ENCODE measurements at regions of chr9 and their contacts with region 1.

Region 1: DNA sequence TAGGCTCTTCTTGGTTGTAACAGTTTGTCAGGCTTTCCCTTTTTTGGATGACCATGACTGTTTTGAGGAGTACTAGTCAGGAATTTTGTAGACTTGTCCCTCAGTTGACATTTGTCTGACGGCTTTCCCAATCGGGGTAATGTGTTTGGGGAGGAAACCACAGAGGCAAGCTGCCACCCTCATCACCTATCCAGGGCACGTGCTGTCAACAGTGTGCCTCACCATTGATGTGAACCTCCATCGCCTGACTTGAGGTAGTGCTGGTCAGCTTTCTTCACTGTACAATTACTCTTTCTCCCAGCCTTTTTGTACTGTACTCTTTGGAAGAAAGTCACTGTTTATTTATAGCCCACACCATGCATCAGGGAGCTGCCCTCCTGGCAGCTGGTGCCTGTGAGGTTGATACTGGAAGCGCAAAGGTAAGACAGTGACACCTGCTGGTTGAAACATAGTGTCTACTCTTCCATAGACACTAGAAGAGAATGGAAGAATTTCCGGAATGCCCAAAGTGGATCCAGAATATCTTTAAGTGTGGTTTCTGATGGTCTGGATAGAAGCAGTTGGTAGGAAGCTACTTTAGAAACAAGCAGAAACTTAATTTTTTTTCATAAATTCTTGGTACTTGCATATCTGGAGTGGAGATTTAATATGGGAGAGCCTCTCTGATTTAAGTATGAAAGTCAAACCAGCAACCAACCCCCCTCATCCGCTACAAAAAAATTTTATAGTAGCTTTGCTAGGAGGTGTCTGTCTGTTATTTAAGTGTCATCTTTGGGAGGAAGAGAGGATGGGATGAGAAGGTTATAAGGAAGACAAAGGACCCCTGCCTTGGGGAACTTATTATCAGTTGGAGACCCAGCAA is 69.3 kb downstream of the SNX30 start:
- DNase-seq: peak; percentile 58
- H3K4me3 ChIP-seq: peak overlapping the region in 1 of 2 experiments; percentile 7; a peak in 1 of 4 replicates
- H3K27ac ChIP-seq: no peak overlapping the region; a peak in 1 of 4 replicates
- H3K4me1 ChIP-seq: peaks cover 0 to 2% of the 10 kb centered on the region in 2 experiments; a peak in 1 of 4 replicates
- H3K27me3 ChIP-seq: no peaks in the 10 kb centered on the region
- CTCF ChIP-seq: peak; percentile 73
- EP300 ChIP-seq: no peak
- RAD21 ChIP-seq: peak; percentile 80

Region 2: GRCh38 chr9:112836394-112836793 is 16.5 kb after region 1 on chr9:
- CTCF ChIA-PET with region 1: interaction called, 10 read pairs
- POLR2A ChIA-PET with region 1: no interaction called
- DNase-seq: no peak
- H3K4me3 ChIP-seq: no peak overlapping the region
- H3K27ac ChIP-seq: no peak overlapping the region
- H3K4me1 ChIP-seq: peaks cover 0 to 3% of the 10 kb centered on the region in 2 experiments; a peak in 1 of 4 replicates
- H3K27me3 ChIP-seq: no peaks in the 10 kb centered on the region
- CTCF ChIP-seq: no peak
- EP300 ChIP-seq: no peak
- RAD21 ChIP-seq: no peak

Region 3: DNA sequence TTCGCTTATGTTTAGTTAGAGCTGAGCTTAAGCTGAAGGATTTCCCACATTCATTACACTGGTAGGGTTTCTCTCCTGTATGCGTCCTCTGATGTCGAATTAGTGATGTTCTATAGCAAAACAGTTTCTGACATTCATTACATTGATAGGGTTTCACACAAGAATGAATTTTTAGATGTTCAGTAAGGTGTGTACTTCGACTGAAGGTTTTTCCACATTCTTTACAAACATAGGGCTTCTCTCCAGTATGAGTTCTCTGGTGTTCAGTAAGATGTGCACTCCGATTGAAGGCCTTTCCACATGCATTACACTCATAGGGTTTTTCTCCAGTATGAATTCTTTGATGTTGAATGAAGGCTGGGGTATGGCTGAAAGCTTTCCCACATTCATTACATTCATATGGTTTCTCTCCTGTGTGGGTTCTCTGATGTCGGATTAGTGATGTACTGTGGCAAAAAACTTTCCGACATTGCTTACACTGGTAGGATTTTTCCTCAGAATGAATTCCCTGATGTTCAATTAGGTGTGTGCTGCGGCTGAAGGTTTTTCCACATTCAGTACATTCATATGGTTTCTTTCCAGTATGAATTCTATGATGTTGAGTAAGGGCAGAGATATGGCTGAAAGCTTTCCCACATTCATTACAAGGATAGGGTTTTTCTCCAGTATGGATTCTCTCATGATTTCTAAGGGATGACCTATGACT is 177.5 kb after region 1 on chr9:
- CTCF ChIA-PET with region 1: no interaction called
- POLR2A ChIA-PET with region 1: no interaction called
- DNase-seq: no peak
- H3K4me3 ChIP-seq: no peak overlapping the region; a peak in 1 of 4 replicates
- H3K27ac ChIP-seq: no peak overlapping the region
- H3K4me1 ChIP-seq: no peaks in the 10 kb centered on the region
- H3K27me3 ChIP-seq: no peaks in the 10 kb centered on the region
- CTCF ChIP-seq: no peak
- EP300 ChIP-seq: no peak
- RAD21 ChIP-seq: no peak